ENCODE measurements at regions of chr1 and their contacts with region 1.

Region 1: GRCh38 chr1:167722870-167723251 is 1.1 kb downstream of the MPZL1 start:
- DNase-seq: no peak
- ATAC-seq: no peak
- H3K4me3 Mint-ChIP-seq: peak overlapping the region; percentile 81
- H3K27ac Mint-ChIP-seq: no peak overlapping the region
- H3K4me1 Mint-ChIP-seq: peaks cover 60% of the 10 kb centered on the region
- H3K27me3 Mint-ChIP-seq: no peaks in the 10 kb centered on the region
- CTCF ChIP-seq: no peak

Region 2: DNA sequence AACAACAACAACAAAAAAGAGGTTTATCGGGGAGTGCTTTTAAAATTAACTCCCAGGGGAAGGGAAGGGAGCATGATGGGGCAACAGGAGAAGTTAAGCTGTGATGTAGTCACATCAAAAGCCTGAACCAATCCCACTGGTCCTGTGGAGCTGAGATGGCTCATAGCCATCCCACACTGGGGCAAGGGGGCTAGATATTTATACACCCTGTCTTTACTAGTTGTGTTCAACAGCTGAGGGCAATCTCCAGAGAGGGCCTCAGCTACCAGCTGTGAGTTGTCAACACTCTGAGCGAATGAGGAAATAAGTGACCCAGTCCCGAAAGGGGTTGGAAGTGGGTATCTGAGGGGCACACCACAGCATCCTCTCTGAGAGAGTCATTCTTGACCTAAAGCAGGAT is 138.3 kb before region 1 on chr1:
- CTCF ChIA-PET with region 1: no interaction called
- POLR2A ChIA-PET with region 1: no interaction called
- DNase-seq: no peak
- ATAC-seq: no peak
- H3K4me3 Mint-ChIP-seq: no peak overlapping the region
- H3K27ac Mint-ChIP-seq: no peak overlapping the region
- H3K4me1 Mint-ChIP-seq: peaks cover under 1% of the 10 kb centered on the region; the same call in 1 of the 2 replicates
- H3K27me3 Mint-ChIP-seq: no peaks in the 10 kb centered on the region
- CTCF ChIP-seq: no peak

Region 3: DNA sequence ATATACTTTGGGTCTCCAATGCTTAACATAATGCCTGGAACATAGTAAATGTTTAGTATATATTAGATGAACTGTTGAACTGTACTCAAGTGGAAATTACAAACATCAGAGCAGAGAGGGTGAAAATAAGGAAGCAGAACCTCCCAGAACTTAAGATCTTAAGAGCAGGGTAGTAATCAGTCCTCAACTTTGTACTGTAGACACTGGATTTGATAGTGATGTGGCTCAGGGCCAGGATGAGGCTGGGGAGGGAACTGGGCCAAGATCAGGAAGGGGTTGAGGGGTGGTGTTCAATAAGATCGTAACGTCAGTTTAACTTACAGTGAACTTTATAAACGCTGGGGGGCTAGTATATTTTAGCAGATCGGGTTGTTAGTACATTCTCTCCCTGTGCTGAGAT is 14.3 kb after region 1 on chr1:
- CTCF ChIA-PET with region 1: no interaction called
- POLR2A ChIA-PET with region 1: interaction called, 11 read pairs
- DNase-seq: no peak
- ATAC-seq: no peak
- H3K4me3 Mint-ChIP-seq: no peak overlapping the region
- H3K27ac Mint-ChIP-seq: no peak overlapping the region
- H3K4me1 Mint-ChIP-seq: peaks cover 16% of the 10 kb centered on the region
- H3K27me3 Mint-ChIP-seq: no peaks in the 10 kb centered on the region
- CTCF ChIP-seq: no peak

Region 4: GRCh38 chr1:167763525-167764220 is 40.8 kb after region 1 on chr1:
- CTCF ChIA-PET with region 1: no interaction called
- POLR2A ChIA-PET with region 1: no interaction called
- DNase-seq: no peak
- ATAC-seq: no peak
- H3K4me3 Mint-ChIP-seq: no peak overlapping the region
- H3K27ac Mint-ChIP-seq: no peak overlapping the region
- H3K4me1 Mint-ChIP-seq: peaks cover 24% of the 10 kb centered on the region
- H3K27me3 Mint-ChIP-seq: peaks cover 34% of the 10 kb centered on the region
- CTCF ChIP-seq: no peak

Region 5: GRCh38 chr1:168032029-168032428 is 309.2 kb after region 1 on chr1:
- CTCF ChIA-PET with region 1: no interaction called
- POLR2A ChIA-PET with region 1: no interaction called
- DNase-seq: no peak
- ATAC-seq: no peak
- H3K4me3 Mint-ChIP-seq: no peak overlapping the region
- H3K27ac Mint-ChIP-seq: no peak overlapping the region
- H3K4me1 Mint-ChIP-seq: no peaks in the 10 kb centered on the region
- H3K27me3 Mint-ChIP-seq: no peaks in the 10 kb centered on the region
- CTCF ChIP-seq: no peak

Measured in WTC11 (cell line).